Colonic mucosa (tissue), 4 donors: ENCODE measurements at regions of chr11 and their contacts with region 1.

Region 1: DNA sequence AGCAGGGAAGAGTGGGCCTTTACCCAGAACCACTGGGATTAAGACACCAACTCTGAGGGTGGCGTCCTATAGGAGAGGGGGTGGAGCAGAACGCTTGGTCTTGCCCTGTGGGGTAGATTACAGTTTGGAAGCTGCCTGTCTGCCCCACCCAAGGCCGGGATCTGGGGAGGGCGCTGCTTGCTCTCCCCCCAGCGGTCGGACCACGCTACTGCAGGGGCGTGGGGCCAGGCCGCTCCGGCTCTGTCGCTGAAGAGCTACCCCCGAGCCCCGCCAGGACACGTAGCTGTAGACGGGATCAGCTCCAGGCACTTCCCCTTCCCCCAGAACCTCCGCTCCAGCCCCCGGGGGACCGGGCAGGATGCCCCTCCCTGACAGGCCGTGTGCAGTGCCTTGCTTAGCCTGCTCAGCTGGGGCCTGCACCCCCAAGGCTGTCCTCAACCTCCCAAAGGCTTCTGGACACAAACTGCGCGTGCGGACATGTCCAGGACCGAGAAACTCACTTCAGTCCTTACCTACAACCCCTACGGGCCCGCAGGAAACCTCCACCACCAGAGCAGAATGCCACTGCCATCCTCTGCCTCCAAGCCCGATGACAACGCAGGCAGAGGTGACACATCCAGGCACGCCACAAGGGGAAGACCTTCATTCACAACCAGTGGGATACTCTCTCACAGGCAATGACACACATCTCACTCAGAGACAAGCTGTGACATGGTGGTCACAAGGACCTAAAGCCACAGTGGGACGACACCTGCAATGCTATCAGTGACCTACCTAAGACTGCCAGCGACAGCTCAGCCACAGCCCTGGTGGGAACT is 3.6 kb downstream of the AHNAK start:
- DNase-seq: peak; percentile 91
- H3K4me3 ChIP-seq: peak overlapping the region; percentile 67
- H3K27ac ChIP-seq: peak overlapping the region; percentile 96
- H3K4me1 ChIP-seq: peaks cover 69% of the 10 kb centered on the region
- H3K27me3 ChIP-seq: no peaks in the 10 kb centered on the region
- CTCF ChIP-seq: peak; percentile 100

Region 2: DNA sequence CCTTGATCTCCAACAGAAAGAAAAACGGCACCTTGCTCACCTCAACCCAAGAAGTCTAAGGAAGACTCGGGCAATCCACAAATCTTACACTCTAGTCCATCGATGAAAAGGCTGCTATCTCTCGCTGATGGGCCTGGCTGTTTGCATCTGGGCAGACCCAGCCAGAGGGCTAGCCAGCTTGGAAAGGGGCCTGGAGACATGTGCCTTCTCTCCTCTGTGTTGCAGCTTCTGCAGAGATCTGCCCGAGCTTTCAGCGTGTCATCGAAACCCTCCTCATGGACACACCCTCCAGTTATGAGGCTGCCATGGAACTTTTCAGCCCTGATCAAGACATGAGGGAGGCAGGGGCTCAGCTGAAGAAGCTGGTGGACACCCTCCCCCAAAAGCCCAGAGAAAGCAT is 121.0 kb before region 1 on chr11:
- intact Hi-C with region 1: loop called (anchors 5 kb)
- DNase-seq: no peak
- H3K4me3 ChIP-seq: no peak overlapping the region
- H3K27ac ChIP-seq: no peak overlapping the region
- H3K4me1 ChIP-seq: no peaks in the 10 kb centered on the region
- H3K27me3 ChIP-seq: no peaks in the 10 kb centered on the region
- CTCF ChIP-seq: no peak

Region 3: DNA sequence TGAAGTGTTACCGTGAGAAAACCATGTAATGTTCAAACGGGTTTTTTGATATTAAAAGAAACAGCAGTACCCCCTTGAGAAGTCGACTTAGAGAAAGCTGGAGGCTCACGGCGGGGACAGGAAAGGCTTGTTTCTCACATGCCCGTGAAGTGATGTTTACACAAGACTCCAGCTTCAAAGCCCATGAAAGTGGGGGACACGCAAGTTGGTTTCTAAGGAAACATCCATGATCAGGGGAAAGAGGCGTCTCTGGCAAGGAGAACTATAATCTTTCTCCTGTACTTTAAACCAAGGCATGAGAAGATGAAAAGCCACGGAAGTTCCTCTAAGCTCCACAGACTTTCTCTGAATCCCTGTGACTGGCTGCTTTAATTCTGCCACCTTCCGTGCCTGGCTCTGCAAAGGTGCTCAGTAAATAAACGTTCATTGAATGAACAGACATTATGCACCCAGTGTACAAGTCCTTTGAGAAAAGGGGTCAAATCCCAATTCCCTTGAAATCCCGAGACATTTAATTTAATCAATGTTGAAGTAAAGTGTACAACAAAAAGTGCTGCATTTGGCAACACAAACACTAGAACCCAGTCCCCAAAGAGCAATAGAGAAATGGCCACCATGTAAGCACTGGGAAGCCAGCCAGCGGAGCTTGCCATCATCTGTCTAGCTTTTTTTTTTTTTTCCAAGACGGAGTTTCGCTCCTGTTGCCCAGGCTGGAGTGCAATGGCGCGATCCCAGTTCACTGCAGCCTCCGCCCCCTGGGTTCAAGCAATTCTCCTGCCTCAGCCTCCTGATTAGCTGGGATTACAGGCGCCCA is 55.0 kb before region 1 on chr11:
- intact Hi-C with region 1: no loop called
- DNase-seq: no peak
- H3K4me3 ChIP-seq: no peak overlapping the region
- H3K27ac ChIP-seq: no peak overlapping the region
- H3K4me1 ChIP-seq: no peaks in the 10 kb centered on the region
- H3K27me3 ChIP-seq: no peaks in the 10 kb centered on the region
- CTCF ChIP-seq: no peak

Region 4: DNA sequence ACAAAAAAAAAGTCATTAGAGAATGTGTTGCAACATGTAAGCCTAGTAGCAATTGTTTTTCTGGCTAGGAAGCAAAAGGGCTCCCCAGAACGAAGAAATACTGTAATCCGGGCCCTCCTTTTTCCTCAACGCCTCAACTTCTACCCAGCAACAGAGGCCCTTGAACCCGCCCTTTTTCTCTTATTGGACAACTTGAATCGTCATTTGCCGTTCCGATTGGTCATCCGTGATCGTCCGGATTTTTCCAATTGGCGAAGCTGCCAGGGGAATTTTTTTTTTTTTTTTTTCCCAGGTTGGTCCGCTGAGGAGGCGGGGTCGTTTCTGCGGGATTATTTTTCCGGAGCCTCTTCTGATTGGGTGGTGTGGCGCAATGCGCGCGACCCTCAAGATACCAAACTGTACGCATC is 184.8 kb after region 1 on chr11:
- intact Hi-C with region 1: no loop called
- DNase-seq: peak; percentile 91
- H3K4me3 ChIP-seq: peak overlapping the region; percentile 74
- H3K27ac ChIP-seq: peak overlapping the region; percentile 98
- H3K4me1 ChIP-seq: peaks cover 13% of the 10 kb centered on the region
- H3K27me3 ChIP-seq: no peaks in the 10 kb centered on the region
- CTCF ChIP-seq: no peak